A549 (cell line): ENCODE measurements at regions of chr6 and their contacts with region 1.

Region 1: GRCh38 chr6:84422380-84422968 is 195.0 kb upstream of the CEP162 start:
- DNase-seq: peak; percentile 18 to 64
- ATAC-seq: peak; percentile 97 to 99
- H3K4me3 ChIP-seq: peak overlapping the region; percentile 14; the same call in 1 of the 3 replicates
- H3K27ac ChIP-seq: no peak overlapping the region
- H3K4me1 ChIP-seq: no peaks in the 10 kb centered on the region
- CTCF ChIP-seq: peak; percentile 72
- EP300 ChIP-seq: no peak
- POLR2A ChIP-seq: no peak
- RAD21 ChIP-seq: peak; percentile 86

Region 2: GRCh38 chr6:84539122-84539856 is 116.8 kb after region 1 on chr6:
- CTCF ChIA-PET with region 1: interaction called, 11 read pairs
- POLR2A ChIA-PET with region 1: no interaction called
- DNase-seq: no peak
- ATAC-seq: no peak
- H3K4me3 ChIP-seq: no peak overlapping the region
- H3K27ac ChIP-seq: no peak overlapping the region
- H3K4me1 ChIP-seq: no peaks in the 10 kb centered on the region
- CTCF ChIP-seq: no peak
- EP300 ChIP-seq: no peak
- POLR2A ChIP-seq: no peak
- RAD21 ChIP-seq: no peak

Region 3: GRCh38 chr6:84764332-84765049 is 342.0 kb after region 1 on chr6 and contains the start of gene TBX18:
- CTCF ChIA-PET with region 1: interaction called, 11 read pairs
- POLR2A ChIA-PET with region 1: no interaction called
- DNase-seq: peak; percentile 67 to 98
- ATAC-seq: peak; percentile 78 to 85
- H3K4me3 ChIP-seq: peak within 1 kb of the TSS; percentile 86
- H3K27ac ChIP-seq: peak within 1 kb of the TSS; percentile 95 to 98
- H3K4me1 ChIP-seq: peaks cover 18% of the 10 kb centered on the region
- CTCF ChIP-seq: no peak
- EP300 ChIP-seq: no peak
- POLR2A ChIP-seq: 0 out of 2 replicates have a peak, but pooled peaks have one; percentile 39
- RAD21 ChIP-seq: no peak
- polyA plus RNA-seq, gene TBX18: 67.4 and 76.4 TPM in 2 replicates

Region 4: GRCh38 chr6:84967389-84967788 is 544.9 kb after region 1 on chr6:
- CTCF ChIA-PET with region 1: interaction called, 19 read pairs
- POLR2A ChIA-PET with region 1: no interaction called
- DNase-seq: peak; percentile 20 to 65
- ATAC-seq: peak; percentile 62 to 87; a peak in 4 of 6 replicates
- H3K4me3 ChIP-seq: no peak overlapping the region
- H3K27ac ChIP-seq: peak overlapping the region; percentile 28 to 33; a peak in 2 of 6 replicates
- H3K4me1 ChIP-seq: no peaks in the 10 kb centered on the region
- CTCF ChIP-seq: peak; percentile 57
- EP300 ChIP-seq: no peak
- POLR2A ChIP-seq: no peak
- RAD21 ChIP-seq: peak; percentile 73 to 87